ENCODE measurements at regions of chr17 and their contacts with region 1.

Region 1: GRCh38 chr17:40615295-40615988 is 32.2 kb downstream of the SMARCE1 start:
- DNase-seq: no peak
- ATAC-seq: peak; percentile 39
- H3K4me3 Mint-ChIP-seq: peak overlapping the region; percentile 71
- H3K27ac Mint-ChIP-seq: peak overlapping the region; percentile 94
- H3K4me1 Mint-ChIP-seq: peaks cover 68% of the 10 kb centered on the region
- H3K27me3 Mint-ChIP-seq: no peaks in the 10 kb centered on the region

Region 2: DNA sequence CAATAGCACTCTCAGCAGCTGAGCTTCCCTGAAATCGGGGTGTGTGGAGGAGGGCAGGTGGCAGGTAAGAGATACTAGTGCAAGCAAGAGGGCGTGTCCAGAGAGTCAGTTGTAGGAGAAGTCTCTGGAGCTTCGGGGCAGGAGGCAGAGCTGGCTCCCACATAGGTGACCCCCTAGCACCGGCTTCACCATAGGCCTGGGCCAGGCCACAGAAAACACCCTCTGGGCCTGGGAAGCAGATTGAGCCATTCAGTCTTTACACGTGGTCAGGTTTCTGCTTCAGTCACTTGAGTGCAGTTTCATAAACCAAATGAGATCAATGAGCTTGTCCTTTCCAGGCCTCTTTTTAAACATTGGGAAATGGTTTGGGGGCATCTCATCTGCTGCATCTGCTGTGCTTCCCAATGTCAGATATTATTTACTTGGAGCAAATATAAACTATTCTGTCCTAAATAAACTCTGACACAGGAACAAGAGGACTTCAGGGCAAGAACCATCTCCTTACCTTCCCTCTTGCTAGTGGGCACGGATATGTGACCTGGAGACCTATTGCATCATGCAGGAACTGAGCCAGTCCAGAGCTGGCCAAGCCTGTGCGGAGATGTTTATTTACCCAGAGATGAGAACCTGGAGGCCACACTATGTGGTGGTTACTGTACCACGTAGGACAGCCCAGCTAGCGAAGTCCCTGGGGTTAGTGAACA is 66.3 kb before region 1 on chr17:
- POLR2A ChIA-PET with region 1: interaction called, 16 read pairs
- DNase-seq: peak; percentile 36
- ATAC-seq: no peak
- H3K4me3 Mint-ChIP-seq: peak overlapping the region; percentile 53
- H3K27ac Mint-ChIP-seq: peak overlapping the region; percentile 83
- H3K4me1 Mint-ChIP-seq: peaks cover 80% of the 10 kb centered on the region
- H3K27me3 Mint-ChIP-seq: no peaks in the 10 kb centered on the region

Region 3: GRCh38 chr17:40632216-40632615 is 16.8 kb after region 1 on chr17:
- POLR2A ChIA-PET with region 1: no interaction called
- DNase-seq: no peak
- ATAC-seq: no peak
- H3K4me3 Mint-ChIP-seq: no peak overlapping the region
- H3K27ac Mint-ChIP-seq: no peak overlapping the region
- H3K4me1 Mint-ChIP-seq: peaks cover 3% of the 10 kb centered on the region
- H3K27me3 Mint-ChIP-seq: no peaks in the 10 kb centered on the region

Measured in activated naive CD8-positive, alpha-beta T cell treated with anti-CD3 and anti-CD28 coated beads, Interleukin-2, amount 10 ng/mL, durations not matched to agents 7 days and 5 days (primary cell).